ENCODE measurements at regions of chr5 and their contacts with region 1.

Region 1: DNA sequence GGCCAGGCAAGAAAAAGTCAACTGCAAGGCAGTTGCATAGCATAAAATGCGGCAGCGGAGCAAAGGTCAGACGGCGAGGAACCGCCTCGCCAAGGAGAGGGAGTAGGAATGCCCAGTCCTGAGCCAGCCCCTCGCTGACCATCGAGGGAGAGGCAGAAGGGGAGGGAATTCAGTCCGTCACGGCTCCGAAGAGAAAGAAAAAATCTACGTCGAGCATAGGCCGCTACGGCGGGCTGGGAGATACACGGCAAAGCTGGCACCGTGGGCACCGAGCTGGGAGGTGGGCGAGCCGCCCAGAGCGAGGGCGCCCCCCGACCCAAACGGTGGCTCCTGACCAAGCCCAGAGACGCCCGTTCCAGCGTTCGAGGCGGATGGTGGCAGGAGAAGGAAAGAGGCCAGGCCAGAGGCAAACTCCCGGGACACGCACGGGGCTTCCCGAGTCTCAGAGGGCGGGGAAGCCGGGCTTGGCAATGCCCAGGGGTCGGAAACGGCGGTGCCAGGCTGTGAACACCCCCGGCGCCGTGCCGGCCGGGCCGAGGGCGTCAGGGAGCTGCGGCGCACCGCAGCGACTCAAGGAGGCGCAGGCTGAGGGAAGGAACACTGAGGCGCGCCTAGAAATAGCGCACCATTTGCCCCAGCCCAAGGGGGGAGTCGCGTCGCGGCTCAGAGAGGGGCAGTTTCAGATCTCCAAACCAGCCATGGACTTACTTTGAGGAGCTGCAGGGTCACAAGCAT is 518 bp downstream of the SPRY4 start:
- DNase-seq: no peak
- ATAC-seq: peak; percentile 59
- H3K4me3 Mint-ChIP-seq: peak overlapping the region; percentile 78
- H3K27ac Mint-ChIP-seq: no peak overlapping the region
- H3K4me1 Mint-ChIP-seq: peaks cover 34% of the 10 kb centered on the region
- H3K27me3 Mint-ChIP-seq: peaks cover 64% of the 10 kb centered on the region
- CTCF ChIP-seq: peak; percentile 33

Region 2: GRCh38 chr5:142334538-142334937 is 10.2 kb after region 1 on chr5:
- CTCF ChIA-PET with region 1: interaction called, 11 read pairs
- POLR2A ChIA-PET with region 1: no interaction called
- intact Hi-C with region 1: no loop called
- DNase-seq: no peak
- ATAC-seq: no peak
- H3K4me3 Mint-ChIP-seq: no peak overlapping the region
- H3K27ac Mint-ChIP-seq: no peak overlapping the region
- H3K4me1 Mint-ChIP-seq: no peaks in the 10 kb centered on the region
- H3K27me3 Mint-ChIP-seq: peaks cover 2% of the 10 kb centered on the region
- CTCF ChIP-seq: no peak